Posterior vena cava (tissue), 2 donors: ENCODE measurements at regions of chr15 and their contacts with region 1.

Region 1: GRCh38 chr15:41511899-41512369 is 1.7 kb downstream of the LTK start:
- DNase-seq: no peak

Region 2: GRCh38 chr15:41154412-41154811 is 357.5 kb before region 1 on chr15:
- intact Hi-C with region 1: no loop called
- DNase-seq: no peak

Region 3: GRCh38 chr15:41438206-41438605 is 73.7 kb before region 1 on chr15:
- intact Hi-C with region 1: loop called in 1 of 2 experiments (anchors 2 kb)
- DNase-seq: no peak